ENCODE measurements at regions of chr15 and their contacts with region 1.

Region 1: GRCh38 chr15:67863442-67863987 is 23.7 kb upstream of the RNU6-1 start:
- DNase-seq: peak; percentile 84 to 93 (median 87)
- H3K4me3 ChIP-seq: peak overlapping the region in 2 of 3 donors; percentile 10 to 66
- H3K27ac ChIP-seq: no peak overlapping the region
- H3K4me1 ChIP-seq: peaks cover 0 to 6% (median 0%) of the 10 kb centered on the region in 3 donors
- H3K27me3 ChIP-seq: no peaks in the 10 kb centered on the region
- CTCF ChIP-seq: peak; percentile 96

Region 2: DNA sequence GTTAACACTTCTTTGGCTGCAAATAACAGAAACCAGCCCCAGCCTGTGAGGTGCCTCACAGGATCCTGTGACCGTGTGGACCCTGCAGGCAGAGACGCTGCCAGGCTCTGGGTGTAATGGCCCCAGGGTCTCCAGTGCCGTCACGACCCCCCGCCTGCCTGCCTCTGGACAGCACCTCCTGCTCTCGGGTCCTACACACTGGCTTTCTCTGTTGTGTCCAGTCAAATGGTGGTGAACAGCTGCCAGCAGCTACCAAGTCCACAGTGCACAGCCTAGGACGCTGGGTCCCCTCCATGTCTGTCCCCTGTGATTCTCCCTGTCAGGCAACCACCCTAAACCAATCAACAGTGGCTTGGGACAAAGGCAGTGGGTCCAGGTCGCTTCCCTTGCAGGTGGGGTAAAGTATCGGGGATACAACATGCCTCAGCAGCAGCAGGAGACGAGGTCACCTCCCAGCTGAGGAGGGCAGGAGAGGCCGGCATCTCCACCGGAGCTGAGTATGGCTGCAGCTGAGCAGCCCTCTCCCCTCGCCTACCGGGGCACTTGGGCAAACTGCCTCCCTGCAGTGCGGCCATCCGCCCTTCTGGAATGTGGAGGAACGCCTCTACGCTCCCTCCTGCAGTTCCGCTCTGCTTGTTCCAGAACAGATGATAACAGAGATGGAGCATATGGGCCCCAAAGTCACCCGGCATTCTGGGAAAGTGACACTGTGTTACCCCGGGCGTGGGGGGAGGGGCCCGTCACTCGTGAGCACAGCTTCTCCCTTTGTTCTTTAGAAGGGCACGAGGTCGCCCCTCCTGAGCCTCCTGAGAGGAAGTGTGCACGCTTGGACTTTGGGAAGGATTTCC is 59.3 kb before region 1 on chr15:
- intact Hi-C with region 1: no loop called
- DNase-seq: peak; percentile 61 to 78 (median 67)
- H3K4me3 ChIP-seq: no peak overlapping the region
- H3K27ac ChIP-seq: no peak overlapping the region
- H3K4me1 ChIP-seq: peaks cover 0 to 6% (median 0%) of the 10 kb centered on the region in 3 donors
- H3K27me3 ChIP-seq: no peaks in the 10 kb centered on the region
- CTCF ChIP-seq: no peak

Region 3: DNA sequence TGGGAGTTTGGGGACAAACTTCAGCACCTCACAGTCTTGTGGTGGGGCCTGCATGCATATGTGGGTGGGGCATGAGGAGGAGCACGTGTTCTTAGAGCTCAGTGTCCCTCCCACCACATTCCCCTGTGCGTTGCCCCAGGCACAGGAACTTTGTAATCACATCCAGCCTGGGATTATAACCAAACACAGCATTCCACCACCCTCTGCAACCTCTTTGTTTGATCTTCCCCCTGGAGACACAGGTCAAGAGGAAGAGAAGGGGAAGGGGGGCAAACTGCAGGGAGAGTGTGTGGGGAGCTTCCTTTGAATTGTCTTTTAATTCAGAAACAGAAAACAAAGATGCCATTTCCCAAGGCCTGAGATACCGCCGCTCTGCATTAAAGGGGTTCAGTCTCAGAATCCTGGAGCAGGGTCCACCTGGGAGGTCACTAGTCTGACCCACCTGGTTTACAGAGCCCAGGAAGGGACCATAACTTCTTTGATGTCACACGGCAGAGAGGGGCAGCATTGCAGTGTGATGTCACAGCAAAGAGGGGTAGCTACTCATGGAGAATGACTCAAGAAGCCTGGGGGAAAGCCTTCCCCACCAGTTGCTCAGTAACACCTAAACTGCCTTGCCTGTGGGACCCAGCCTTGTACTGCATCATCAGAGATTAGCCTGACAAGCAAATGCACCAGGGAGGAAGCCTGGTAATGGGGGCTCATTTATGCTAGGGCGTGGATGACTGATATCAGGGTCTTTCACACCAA is 82.6 kb after region 1 on chr15:
- intact Hi-C with region 1: no loop called
- DNase-seq: peak in 4 of 5 donors; percentile 82 to 90 (median 87)
- H3K4me3 ChIP-seq: no peak overlapping the region
- H3K27ac ChIP-seq: no peak overlapping the region
- H3K4me1 ChIP-seq: no peaks in the 10 kb centered on the region
- H3K27me3 ChIP-seq: no peaks in the 10 kb centered on the region
- CTCF ChIP-seq: no peak

Region 4: GRCh38 chr15:68154923-68155559 is 291.5 kb after region 1 on chr15:
- intact Hi-C with region 1: loop called (anchors 10 kb)
- DNase-seq: peak in 3 of 5 donors; percentile 50 to 91 (median 80)
- H3K4me3 ChIP-seq: no peak overlapping the region
- H3K27ac ChIP-seq: no peak overlapping the region
- H3K4me1 ChIP-seq: peaks cover 0 to 2% (median 0%) of the 10 kb centered on the region in 3 donors
- H3K27me3 ChIP-seq: no peaks in the 10 kb centered on the region
- CTCF ChIP-seq: peak; percentile 80